Endothelial cell of umbilical vein (primary cell): ENCODE measurements at regions of chr10 and their contacts with region 1.

Region 1: GRCh38 chr10:80699602-80700039 is 161.9 kb downstream of the SH2D4B start:
- DNase-seq: peak; percentile 58
- H3K4me3 ChIP-seq: no peak overlapping the region
- H3K27ac ChIP-seq: no peak overlapping the region
- H3K4me1 ChIP-seq: no peaks in the 10 kb centered on the region
- H3K27me3 ChIP-seq: no peaks in the 10 kb centered on the region
- CTCF ChIP-seq: peak; percentile 74 to 92
- POLR2A ChIP-seq: no peak

Region 2: DNA sequence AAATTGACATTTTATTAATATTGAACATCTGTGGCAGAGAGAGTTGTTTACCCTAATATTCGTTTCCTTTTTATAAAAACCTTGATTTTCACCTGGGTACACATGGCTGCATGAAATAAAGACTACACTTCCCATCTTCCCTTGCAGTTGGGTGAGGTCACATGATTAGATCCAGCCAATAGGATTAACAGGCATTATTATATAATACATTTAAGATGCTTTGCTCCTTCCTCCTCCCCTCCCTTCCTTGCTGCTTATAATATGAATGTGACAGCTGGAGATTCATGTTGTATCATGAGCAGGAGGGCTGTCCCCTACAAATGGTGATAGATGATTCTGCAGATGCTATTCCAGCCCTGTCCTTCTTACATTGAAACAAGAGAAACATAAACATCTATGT is 15.4 kb before region 1 on chr10:
- CTCF ChIA-PET with region 1: interaction called, 26 read pairs
- POLR2A ChIA-PET with region 1: no interaction called
- dilution Hi-C with region 1: no loop called
- intact Hi-C with region 1: no loop called
- DNase-seq: peak; percentile 73
- H3K4me3 ChIP-seq: no peak overlapping the region
- H3K27ac ChIP-seq: no peak overlapping the region
- H3K4me1 ChIP-seq: no peaks in the 10 kb centered on the region
- H3K27me3 ChIP-seq: no peaks in the 10 kb centered on the region
- CTCF ChIP-seq: no peak
- POLR2A ChIP-seq: no peak

Region 3: DNA sequence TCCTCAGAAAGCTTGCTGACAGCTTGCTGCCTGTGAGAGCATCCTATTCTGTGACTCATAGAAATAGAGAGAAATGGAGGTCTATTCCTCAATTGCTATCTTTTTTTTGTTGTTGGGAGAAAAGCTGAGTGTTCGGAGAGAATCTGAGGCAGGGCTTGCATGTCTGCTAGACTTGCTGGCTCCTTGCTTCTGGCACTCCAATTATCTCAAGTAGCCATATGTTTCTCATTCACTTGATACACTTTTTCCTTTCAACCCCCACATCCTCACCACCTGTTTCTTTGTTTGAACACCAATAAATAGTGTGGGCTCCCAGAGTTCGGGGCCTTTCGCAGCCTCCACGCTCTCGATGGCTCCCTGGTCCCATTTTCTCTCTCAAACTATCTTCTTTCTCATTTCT is 10.2 kb after region 1 on chr10:
- CTCF ChIA-PET with region 1: interaction called, 16 read pairs
- POLR2A ChIA-PET with region 1: no interaction called
- dilution Hi-C with region 1: no loop called
- intact Hi-C with region 1: no loop called
- DNase-seq: no peak
- H3K4me3 ChIP-seq: no peak overlapping the region
- H3K27ac ChIP-seq: no peak overlapping the region
- H3K4me1 ChIP-seq: no peaks in the 10 kb centered on the region
- H3K27me3 ChIP-seq: peaks cover 0 to 2% of the 10 kb centered on the region in 2 experiments
- CTCF ChIP-seq: no peak
- POLR2A ChIP-seq: no peak

Region 4: DNA sequence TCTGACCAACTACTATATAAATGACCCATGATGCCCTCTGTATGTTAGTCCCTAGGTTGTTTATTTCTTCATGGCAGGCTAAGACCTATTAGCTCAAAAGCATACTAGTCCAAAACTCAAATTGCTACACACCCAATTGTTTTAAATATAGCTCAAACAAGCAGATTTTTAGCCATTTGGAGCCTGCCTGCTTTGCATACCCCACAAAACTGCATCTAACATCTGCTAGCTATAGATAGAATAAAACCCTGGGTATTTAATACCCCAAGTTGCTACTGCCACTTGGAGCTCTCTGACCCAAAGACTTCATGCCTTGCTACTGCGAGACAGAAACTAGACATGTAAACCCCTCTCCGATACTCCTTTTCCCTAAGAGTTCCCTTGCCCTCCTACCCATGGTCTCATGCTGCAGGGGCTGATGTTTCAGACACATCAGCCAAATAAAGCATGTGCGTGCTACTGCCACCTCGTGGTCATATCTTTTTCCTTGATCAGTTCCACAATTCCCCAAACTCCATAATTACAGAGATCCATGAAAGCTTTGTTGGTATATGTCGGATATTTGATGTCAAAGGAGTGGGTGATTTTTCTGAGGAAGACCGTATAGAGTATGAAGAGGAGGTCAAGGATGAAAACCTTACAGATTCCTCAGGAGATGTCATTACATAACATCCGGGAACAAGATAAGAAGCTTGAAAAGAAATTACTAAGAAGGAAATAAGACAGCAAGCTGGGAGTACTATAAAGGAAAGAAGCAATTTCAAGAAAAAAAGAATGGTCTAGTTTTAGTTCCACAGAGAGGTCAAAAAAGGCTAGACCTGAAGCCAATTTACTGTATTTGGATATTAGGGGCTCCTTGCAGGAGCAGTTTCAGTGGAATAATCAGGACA is 224.7 kb after region 1 on chr10:
- CTCF ChIA-PET with region 1: interaction called, 58 read pairs
- POLR2A ChIA-PET with region 1: no interaction called
- dilution Hi-C with region 1: no loop called
- intact Hi-C with region 1: loop called (anchors 1 kb)
- DNase-seq: peak; percentile 56
- H3K4me3 ChIP-seq: no peak overlapping the region
- H3K27ac ChIP-seq: no peak overlapping the region
- H3K4me1 ChIP-seq: no peaks in the 10 kb centered on the region
- H3K27me3 ChIP-seq: peaks cover 0 to 4% of the 10 kb centered on the region in 2 experiments
- CTCF ChIP-seq: peak; percentile 46 to 63
- POLR2A ChIP-seq: no peak

Region 5: GRCh38 chr10:81018708-81019365 is 319.2 kb after region 1 on chr10:
- CTCF ChIA-PET with region 1: interaction called, 15 read pairs
- POLR2A ChIA-PET with region 1: no interaction called
- dilution Hi-C with region 1: no loop called
- intact Hi-C with region 1: loop called (anchors 1 kb)
- DNase-seq: peak; percentile 53
- H3K4me3 ChIP-seq: no peak overlapping the region
- H3K27ac ChIP-seq: no peak overlapping the region
- H3K4me1 ChIP-seq: no peaks in the 10 kb centered on the region
- H3K27me3 ChIP-seq: no peaks in the 10 kb centered on the region
- CTCF ChIP-seq: peak; percentile 68 to 77
- POLR2A ChIP-seq: no peak